A549 (cell line): ENCODE measurements at regions of chr6 and their contacts with region 1.

Region 1: GRCh38 chr6:30914076-30914853 is at the start of gene VARS2:
- DNase-seq: peak; percentile 86 to 88
- ATAC-seq: peak; percentile 87 to 93
- H3K4me3 ChIP-seq: peak within 1 kb of the TSS; percentile 60
- H3K27ac ChIP-seq: peak within 1 kb of the TSS; percentile 97
- H3K4me1 ChIP-seq: peaks cover 19% of the 10 kb centered on the region
- CTCF ChIP-seq: peak; percentile 44; the same call in 2 of the 3 replicates
- EP300 ChIP-seq: no peak
- POLR2A ChIP-seq: peak; percentile 68
- RAD21 ChIP-seq: peak; percentile 33 to 56
- polyA plus RNA-seq, gene VARS2: 15.5 and 16.1 TPM in 2 replicates

Region 2: DNA sequence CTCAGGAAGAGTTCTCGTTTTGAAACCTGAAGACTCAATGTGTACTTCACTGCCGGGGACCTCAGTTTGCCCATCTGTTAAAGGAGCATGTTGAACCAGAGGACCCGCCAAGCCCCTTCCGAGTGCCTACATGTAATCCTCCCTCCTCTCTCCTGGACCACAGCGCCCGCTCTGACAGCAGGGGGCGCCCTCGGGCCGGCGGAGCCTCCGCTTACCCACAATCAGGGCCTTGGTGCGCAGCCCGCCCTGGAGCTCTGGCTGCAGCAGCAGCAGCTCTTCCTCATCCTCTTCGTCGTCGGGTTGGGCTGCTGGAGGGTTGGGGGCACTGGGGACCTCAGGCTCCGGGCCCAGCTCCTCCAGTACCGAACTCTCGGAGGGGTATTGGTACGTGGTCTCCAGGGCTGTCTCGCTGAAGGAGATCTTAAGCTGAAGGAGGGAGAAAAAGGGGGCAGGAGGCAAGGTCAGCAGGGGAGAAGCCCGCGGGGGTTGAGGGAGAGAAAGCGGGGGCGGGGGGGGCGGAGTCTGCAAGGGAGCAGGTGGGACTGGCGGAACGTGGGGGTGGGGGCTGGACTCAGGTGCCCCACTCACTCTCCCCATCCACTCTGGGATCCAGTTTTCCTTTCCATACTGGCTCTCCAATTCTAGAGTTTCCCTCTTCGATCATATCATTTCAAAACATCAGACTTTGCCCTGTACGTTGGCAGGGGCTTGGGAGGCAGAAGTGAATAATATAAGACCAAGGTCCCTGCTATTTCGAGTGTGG is 235.1 kb before region 1 on chr6:
- CTCF ChIA-PET with region 1: interaction called, 12 read pairs
- POLR2A ChIA-PET with region 1: no interaction called
- DNase-seq: peak; percentile 67 to 76
- ATAC-seq: peak; percentile 80 to 88; a peak in 5 of 6 replicates
- H3K4me3 ChIP-seq: 0 out of 3 replicates have a peak overlapping the region, but pooled peaks have one; percentile 19
- H3K27ac ChIP-seq: peak overlapping the region; percentile 59 to 87
- H3K4me1 ChIP-seq: peaks cover 37% of the 10 kb centered on the region
- CTCF ChIP-seq: peak; percentile 85
- EP300 ChIP-seq: no peak
- POLR2A ChIP-seq: no peak
- RAD21 ChIP-seq: peak; percentile 89 to 90

Region 3: DNA sequence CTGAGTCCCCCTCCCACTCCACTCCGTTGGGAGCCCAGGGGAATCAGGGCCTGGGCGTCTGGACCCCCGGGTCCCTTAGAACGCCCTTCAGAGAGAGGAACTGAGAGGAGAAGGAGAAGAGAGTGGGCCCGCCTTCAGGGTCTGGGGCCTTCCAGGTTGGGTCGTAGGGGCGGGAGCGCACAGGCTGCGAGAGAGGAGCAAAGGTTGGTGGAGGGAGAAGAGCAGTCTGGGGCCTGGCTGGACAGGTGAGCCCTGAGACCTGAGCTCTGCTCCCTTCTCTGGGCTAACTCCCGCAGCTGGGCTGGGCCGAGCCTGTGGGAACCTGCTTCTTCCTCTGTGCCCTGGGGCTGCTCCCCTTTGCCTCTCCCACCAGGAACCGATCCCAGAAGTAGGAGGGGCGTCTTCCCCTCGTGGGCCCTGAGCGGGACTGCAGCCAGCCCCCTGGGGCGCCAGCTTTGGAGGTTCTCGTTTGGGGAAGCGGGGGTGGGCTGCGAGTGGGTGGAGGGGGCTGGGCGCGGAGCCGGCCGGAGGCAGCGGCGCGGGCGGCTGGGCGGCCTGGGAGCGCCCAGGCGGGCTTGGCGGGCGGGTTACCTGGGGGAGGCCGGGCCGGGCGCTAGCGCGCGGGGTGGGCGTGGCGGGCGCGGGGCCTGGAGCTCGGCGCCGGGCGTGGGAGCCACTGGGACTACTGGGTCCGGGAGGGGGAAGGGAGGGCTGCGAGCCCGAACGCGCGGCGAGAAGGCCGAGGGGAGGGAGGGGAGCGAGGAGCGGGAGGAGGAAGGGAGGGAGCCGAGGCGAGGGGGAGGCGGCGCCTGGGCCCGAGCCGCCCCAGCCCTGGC is 30.4 kb before region 1 on chr6 and contains the start of gene DDR1:
- CTCF ChIA-PET with region 1: interaction called, 12 read pairs
- POLR2A ChIA-PET with region 1: interaction called, 6 read pairs
- DNase-seq: peak; percentile 49 to 58
- ATAC-seq: peak; percentile 37 to 40
- H3K4me3 ChIP-seq: peak within 1 kb of the TSS; percentile 98
- H3K27ac ChIP-seq: peak within 1 kb of the TSS; percentile 99
- H3K4me1 ChIP-seq: peaks cover 40% of the 10 kb centered on the region
- CTCF ChIP-seq: no peak
- EP300 ChIP-seq: no peak
- POLR2A ChIP-seq: 0 out of 2 replicates have a peak, but pooled peaks have one; percentile 14
- RAD21 ChIP-seq: no peak
- polyA plus RNA-seq, gene DDR1: 19.8 and 25.8 TPM in 2 replicates

Region 4: GRCh38 chr6:30942338-30943060 is 28.2 kb after region 1 on chr6:
- CTCF ChIA-PET with region 1: interaction called, 28 read pairs
- POLR2A ChIA-PET with region 1: interaction called, 5 read pairs
- DNase-seq: peak; percentile 85 to 87
- ATAC-seq: peak; percentile 95 to 97
- H3K4me3 ChIP-seq: peak overlapping the region; percentile 12; the same call in 1 of the 3 replicates
- H3K27ac ChIP-seq: peak overlapping the region; percentile 80 to 84
- H3K4me1 ChIP-seq: peaks cover 14% of the 10 kb centered on the region
- CTCF ChIP-seq: peak; percentile 41
- EP300 ChIP-seq: no peak
- POLR2A ChIP-seq: no peak
- RAD21 ChIP-seq: peak; percentile 56; a peak in 4 of 5 replicates

Region 5: GRCh38 chr6:31058128-31058894 is 144.0 kb after region 1 on chr6:
- CTCF ChIA-PET with region 1: interaction called, 143 read pairs
- POLR2A ChIA-PET with region 1: no interaction called
- DNase-seq: peak; percentile 68 to 74
- ATAC-seq: peak; percentile 93
- H3K4me3 ChIP-seq: no peak overlapping the region
- H3K27ac ChIP-seq: peak overlapping the region in 1 of 2 experiments; percentile 49; a peak in 2 of 6 replicates
- H3K4me1 ChIP-seq: peaks cover 15% of the 10 kb centered on the region
- CTCF ChIP-seq: peak; percentile 37
- EP300 ChIP-seq: no peak
- POLR2A ChIP-seq: no peak
- RAD21 ChIP-seq: no peak

Region 6: GRCh38 chr6:31087494-31088089 is 173.3 kb after region 1 on chr6:
- CTCF ChIA-PET with region 1: interaction called, 68 read pairs
- POLR2A ChIA-PET with region 1: no interaction called
- DNase-seq: peak; percentile 76 to 81
- ATAC-seq: peak; percentile 97 to 98
- H3K4me3 ChIP-seq: no peak overlapping the region
- H3K27ac ChIP-seq: no peak overlapping the region
- H3K4me1 ChIP-seq: peaks cover 6% of the 10 kb centered on the region; the same call in 1 of the 3 replicates
- CTCF ChIP-seq: peak; percentile 68
- EP300 ChIP-seq: no peak
- POLR2A ChIP-seq: no peak
- RAD21 ChIP-seq: peak; percentile 72 to 76